RWPE1 (cell line): ENCODE measurements at regions of chr10 and their contacts with region 1.

Region 1: GRCh38 chr10:42782446-42783180 is at the start of gene BMS1:
- DNase-seq: peak; percentile 88
- H3K27ac ChIP-seq: peak within 1 kb of the TSS; percentile 93
- CTCF ChIP-seq: no peak

Region 2: GRCh38 chr10:42753126-42753506 is 29.5 kb before region 1 on chr10:
- CTCF ChIA-PET with region 1: interaction called, 7 read pairs
- POLR2A ChIA-PET with region 1: interaction called, 14 read pairs
- DNase-seq: peak; percentile 65
- H3K27ac ChIP-seq: peak overlapping the region; percentile 24; the same call in 1 of the 2 replicates
- CTCF ChIP-seq: peak; percentile 90

Region 3: GRCh38 chr10:42801135-42801534 is 18.5 kb after region 1 on chr10:
- CTCF ChIA-PET with region 1: no interaction called
- POLR2A ChIA-PET with region 1: no interaction called
- DNase-seq: no peak
- H3K27ac ChIP-seq: no peak overlapping the region
- CTCF ChIP-seq: no peak